Transverse colon (tissue), 4 donors: ENCODE measurements at regions of chr13 and their contacts with region 1.

Region 1: DNA sequence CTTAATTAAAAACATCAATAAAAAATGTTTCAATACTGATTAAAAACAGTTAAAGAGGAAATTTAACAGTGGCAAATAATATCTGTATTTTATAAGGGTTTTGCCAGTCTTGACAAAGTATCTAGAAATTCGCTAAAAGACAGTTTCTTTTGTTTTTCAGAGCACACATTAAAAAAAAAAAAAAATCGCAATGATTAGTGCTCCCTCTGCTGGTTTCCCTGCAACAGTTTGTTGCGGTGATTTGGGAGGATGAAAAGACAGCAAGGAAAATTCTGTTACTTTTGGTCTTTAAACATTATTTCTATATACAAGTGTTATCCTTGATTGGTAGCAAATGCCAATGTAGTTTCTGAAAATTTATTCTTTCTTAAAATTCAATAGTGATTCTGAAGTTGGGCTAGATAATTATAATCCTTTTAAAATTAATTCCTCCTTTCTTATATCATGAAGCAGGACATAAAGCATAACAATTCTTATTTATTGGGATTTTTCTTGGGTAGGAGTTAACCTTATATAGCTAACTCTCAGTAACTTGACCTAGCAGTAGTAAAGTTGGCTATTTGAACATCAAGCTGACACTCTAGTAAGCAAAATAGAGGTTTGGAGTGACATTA is 23.1 kb upstream of the SPRY2 start:
- DNase-seq: no peak
- H3K4me3 ChIP-seq: peak overlapping the region in 1 of 4 donors; percentile 30
- H3K27ac ChIP-seq: no peak overlapping the region
- H3K4me1 ChIP-seq: peaks cover 0 to 29% (median 5%) of the 10 kb centered on the region in 4 donors
- H3K27me3 ChIP-seq: no peaks in the 10 kb centered on the region
- CTCF ChIP-seq: peak; percentile 70 to 76 (median 74)
- EP300 ChIP-seq: no peak
- POLR2A ChIP-seq: no peak

Region 2: DNA sequence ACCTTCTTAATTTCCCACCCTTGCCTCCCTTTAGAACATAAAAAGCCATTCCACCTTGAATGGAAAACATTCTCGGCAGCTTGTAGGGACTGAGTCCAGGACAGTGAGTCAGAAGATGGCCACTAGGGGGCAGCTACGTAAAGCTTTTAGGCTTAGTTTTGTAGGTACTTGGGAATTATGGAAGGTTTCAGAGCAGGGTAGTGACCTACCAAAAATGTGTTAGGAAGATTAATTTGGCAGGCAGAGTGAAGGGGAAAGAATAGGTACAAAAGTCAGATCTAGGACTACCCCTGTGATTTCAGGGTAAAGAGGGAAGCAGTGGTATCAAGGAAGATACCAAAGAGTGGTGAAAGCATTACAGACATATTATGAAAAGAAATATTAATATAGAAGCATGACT is 684.7 kb before region 1 on chr13:
- in situ Hi-C with region 1: loop called (anchors 10 to 25 kb)
- intact Hi-C with region 1: no loop called
- DNase-seq: peak; percentile 79
- H3K4me3 ChIP-seq: no peak overlapping the region
- H3K27ac ChIP-seq: no peak overlapping the region
- H3K4me1 ChIP-seq: no peaks in the 10 kb centered on the region
- H3K27me3 ChIP-seq: no peaks in the 10 kb centered on the region
- CTCF ChIP-seq: peak; percentile 77 to 80 (median 79)
- EP300 ChIP-seq: no peak
- POLR2A ChIP-seq: no peak

Region 3: DNA sequence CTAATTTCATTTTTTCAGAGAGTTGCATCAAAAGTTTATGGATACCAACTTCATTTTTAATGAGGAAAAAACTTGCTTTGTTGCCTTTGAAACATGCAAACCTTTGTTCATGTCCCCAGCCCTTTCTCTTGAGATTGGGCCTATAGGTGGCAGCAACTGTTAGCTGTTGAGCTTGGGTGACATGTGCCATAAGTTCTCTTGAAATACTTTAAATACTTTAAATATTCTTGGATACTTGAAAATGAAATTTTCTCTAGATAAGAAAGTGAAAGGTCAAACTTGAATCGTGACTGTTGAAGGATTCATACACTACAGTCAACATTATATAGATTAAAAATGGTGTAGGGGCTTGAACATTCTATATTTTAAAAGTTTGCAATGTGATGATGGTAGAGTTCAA is 588.2 kb before region 1 on chr13:
- in situ Hi-C with region 1: loop called in 1 of 4 experiments (anchors 25 kb)
- intact Hi-C with region 1: no loop called
- DNase-seq: peak; percentile 36
- H3K4me3 ChIP-seq: no peak overlapping the region
- H3K27ac ChIP-seq: peak overlapping the region in 3 of 4 donors; percentile 8 to 47 (median 24)
- H3K4me1 ChIP-seq: peaks cover 0 to 42% (median 4%) of the 10 kb centered on the region in 4 donors
- H3K27me3 ChIP-seq: no peaks in the 10 kb centered on the region
- CTCF ChIP-seq: peak; percentile 32 to 55 (median 51)
- EP300 ChIP-seq: no peak
- POLR2A ChIP-seq: no peak

Region 4: GRCh38 chr13:80297094-80297493 is 66.9 kb before region 1 on chr13:
- in situ Hi-C with region 1: no loop called
- intact Hi-C with region 1: no loop called
- DNase-seq: no peak
- H3K4me3 ChIP-seq: no peak overlapping the region
- H3K27ac ChIP-seq: no peak overlapping the region
- H3K4me1 ChIP-seq: peaks cover 0 to 4% (median 0%) of the 10 kb centered on the region in 4 donors
- H3K27me3 ChIP-seq: no peaks in the 10 kb centered on the region
- CTCF ChIP-seq: no peak
- EP300 ChIP-seq: no peak
- POLR2A ChIP-seq: no peak

Region 5: GRCh38 chr13:80562433-80563156 is 198.6 kb after region 1 on chr13:
- in situ Hi-C with region 1: no loop called
- intact Hi-C with region 1: no loop called
- DNase-seq: no peak
- H3K4me3 ChIP-seq: no peak overlapping the region
- H3K27ac ChIP-seq: no peak overlapping the region
- H3K4me1 ChIP-seq: peaks cover 0 to 7% (median 0%) of the 10 kb centered on the region in 4 donors
- H3K27me3 ChIP-seq: no peaks in the 10 kb centered on the region
- CTCF ChIP-seq: no peak
- EP300 ChIP-seq: no peak
- POLR2A ChIP-seq: no peak

Region 6: DNA sequence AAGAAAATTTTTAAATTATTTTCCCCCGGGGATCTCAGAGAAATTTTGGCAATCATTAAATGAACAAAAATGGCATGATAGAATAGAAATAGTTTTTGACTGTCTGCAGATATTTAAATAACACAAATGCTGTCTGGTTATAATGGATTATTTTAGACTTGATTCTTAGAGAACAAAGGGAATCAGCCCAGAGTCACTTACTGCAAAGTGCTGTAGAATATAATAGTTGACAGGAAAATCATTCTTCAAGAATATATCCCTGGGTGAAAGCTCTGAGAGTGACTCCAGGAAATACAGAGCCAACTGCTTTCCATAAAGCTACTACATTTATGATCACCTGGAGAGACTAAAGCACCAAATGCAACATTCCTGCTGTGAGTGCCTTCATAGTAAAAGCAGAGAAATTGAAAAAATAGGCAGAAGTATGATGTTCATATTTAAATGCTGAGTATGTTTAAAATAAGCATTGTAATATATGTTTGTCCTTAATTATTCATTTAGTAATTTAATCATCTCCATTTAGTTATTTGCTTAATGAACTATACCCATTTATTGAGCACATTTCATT is 1752.5 kb after region 1 on chr13:
- in situ Hi-C with region 1: no loop called
- intact Hi-C with region 1: no loop called
- DNase-seq: no peak
- H3K4me3 ChIP-seq: no peak overlapping the region
- H3K27ac ChIP-seq: no peak overlapping the region
- H3K4me1 ChIP-seq: no peaks in the 10 kb centered on the region
- H3K27me3 ChIP-seq: no peaks in the 10 kb centered on the region
- CTCF ChIP-seq: no peak
- EP300 ChIP-seq: no peak
- POLR2A ChIP-seq: no peak